Endothelial cell of umbilical vein (primary cell): ENCODE measurements at regions of chr17 and their contacts with region 1.

Region 1: DNA sequence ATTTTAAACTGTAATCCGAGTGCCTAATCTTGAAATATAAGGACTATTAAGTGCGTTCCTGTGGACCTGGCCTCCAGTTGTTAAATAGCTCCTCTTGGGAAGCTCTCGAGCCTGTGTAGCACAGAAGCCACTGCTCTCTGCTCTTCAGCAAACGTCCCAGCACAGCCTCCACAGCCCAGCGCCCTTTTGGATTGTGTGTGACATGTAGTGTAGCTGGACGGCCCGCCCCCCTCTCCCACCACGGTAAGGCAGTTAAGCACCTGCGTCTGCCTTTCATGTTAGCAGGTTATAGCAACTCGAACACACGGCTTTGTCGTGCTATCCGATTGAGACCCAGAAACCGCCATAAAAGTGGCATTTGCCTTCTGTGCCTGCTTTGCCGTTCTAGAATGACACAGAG is 79.2 kb upstream of the CHMP6 start:
- DNase-seq: no peak
- H3K4me3 ChIP-seq: no peak overlapping the region
- H3K27ac ChIP-seq: no peak overlapping the region
- H3K4me1 ChIP-seq: no peaks in the 10 kb centered on the region
- H3K27me3 ChIP-seq: no peaks in the 10 kb centered on the region
- CTCF ChIP-seq: no peak
- POLR2A ChIP-seq: no peak

Region 2: DNA sequence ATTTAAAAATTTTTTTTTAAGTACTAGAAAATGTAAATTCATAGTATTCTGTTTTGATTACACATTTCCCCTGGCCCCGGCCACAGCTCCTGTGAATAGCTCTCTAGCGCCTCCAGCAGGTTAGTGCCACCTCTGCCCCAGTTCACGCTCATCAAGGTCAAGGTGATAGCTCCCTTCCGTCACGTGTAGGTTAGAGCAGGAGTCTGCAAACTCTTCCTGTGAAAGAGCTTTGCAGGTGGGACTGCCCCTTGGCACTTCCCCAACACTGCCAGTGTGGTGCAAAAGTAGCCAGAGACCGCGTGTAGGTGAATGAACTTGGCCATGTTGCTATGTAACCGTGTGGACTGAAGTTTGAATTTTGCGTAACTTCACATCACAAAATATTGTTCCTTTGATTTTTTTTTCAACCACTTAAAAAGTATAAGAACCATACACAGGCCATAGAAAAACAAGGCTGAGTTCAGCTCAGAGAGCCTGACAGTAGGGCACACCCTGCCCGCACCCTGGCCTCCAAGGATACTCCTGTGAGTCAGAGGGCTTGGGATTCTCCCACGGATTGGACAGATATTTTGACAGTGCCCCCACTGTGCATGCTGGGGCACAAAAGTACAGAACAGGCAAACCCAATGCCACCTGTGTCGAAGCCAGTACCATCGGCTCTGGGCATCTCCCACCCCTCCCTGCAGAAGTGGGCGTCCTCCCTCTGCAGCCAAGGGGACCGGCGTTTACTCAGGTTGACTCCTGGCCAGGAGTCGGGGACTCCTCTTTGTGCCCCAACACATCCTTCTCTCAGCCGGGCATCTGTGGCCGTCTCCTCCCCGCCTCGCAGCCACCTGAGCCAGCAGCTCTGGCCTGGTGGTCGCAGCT is 12.8 kb before region 1 on chr17:
- CTCF ChIA-PET with region 1: interaction called, 13 read pairs
- POLR2A ChIA-PET with region 1: no interaction called
- dilution Hi-C with region 1: no loop called
- intact Hi-C with region 1: no loop called
- DNase-seq: peak; percentile 22
- H3K4me3 ChIP-seq: no peak overlapping the region
- H3K27ac ChIP-seq: no peak overlapping the region
- H3K4me1 ChIP-seq: peaks cover 18% of the 10 kb centered on the region
- H3K27me3 ChIP-seq: no peaks in the 10 kb centered on the region
- CTCF ChIP-seq: peak; percentile 53 to 69
- POLR2A ChIP-seq: no peak